Right ventricle myocardium superior (tissue), 1 donor: ENCODE measurements at regions of chr4 and their contacts with region 1.

Region 1: GRCh38 chr4:25925486-25926201 is 11.6 kb downstream of the SMIM20 start:
- DNase-seq: peak; percentile 65
- ATAC-seq: no peak

Region 2: GRCh38 chr4:25981749-25982148 is 56.1 kb after region 1 on chr4:
- intact Hi-C with region 1: loop called (anchors 10 kb)
- DNase-seq: peak; percentile 68
- ATAC-seq: peak; percentile 93

Region 3: DNA sequence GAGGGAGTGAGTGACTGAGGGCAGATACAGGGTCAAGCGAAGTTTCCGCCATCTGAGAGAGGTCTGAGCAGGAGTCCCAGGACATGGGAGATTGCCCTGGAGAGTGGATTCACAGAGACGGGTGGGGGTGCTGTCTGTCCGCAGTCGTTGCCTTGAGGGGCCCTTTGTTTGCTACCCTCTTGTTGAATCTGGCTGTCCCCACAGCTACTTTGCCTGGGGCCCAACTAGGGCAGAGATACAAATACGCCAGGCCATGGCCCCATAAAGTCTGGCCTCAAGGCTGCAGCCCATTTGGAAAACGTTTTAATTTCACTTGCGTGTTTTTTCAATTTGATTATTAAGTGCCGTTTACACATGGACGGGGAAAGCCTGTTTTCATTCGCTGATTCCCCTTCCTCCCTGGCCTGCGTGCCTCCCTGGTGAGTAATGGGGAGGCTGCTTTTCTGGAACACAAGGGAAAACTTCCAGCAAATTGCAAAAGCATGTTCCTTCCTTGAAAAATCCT is 122.8 kb after region 1 on chr4:
- intact Hi-C with region 1: no loop called
- DNase-seq: peak; percentile 70
- ATAC-seq: peak; percentile 81

Region 4: DNA sequence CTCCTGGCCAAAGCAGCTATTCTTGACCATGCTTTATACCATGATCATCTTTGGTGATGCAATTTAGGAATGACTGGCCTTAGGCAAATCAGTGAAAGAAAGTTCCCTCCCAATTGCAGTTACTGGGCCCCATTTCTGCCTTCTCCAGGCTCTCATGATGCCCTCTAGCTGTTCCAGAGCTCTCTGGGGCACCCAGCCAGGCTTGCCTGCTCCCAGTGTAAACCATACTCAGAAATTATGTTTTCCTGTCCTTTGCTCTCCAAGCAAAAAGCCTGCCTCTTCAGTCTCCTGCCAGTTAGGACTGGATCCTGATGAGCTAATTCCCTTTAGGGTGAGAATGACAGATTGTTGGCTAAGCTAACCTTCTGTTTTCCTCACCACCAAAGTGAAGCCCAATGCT is 309.9 kb after region 1 on chr4:
- intact Hi-C with region 1: no loop called
- DNase-seq: peak; percentile 85
- ATAC-seq: peak; percentile 71